Breast epithelium (tissue), 4 donors: ENCODE measurements at regions of chr21 and their contacts with region 1.

Region 1: DNA sequence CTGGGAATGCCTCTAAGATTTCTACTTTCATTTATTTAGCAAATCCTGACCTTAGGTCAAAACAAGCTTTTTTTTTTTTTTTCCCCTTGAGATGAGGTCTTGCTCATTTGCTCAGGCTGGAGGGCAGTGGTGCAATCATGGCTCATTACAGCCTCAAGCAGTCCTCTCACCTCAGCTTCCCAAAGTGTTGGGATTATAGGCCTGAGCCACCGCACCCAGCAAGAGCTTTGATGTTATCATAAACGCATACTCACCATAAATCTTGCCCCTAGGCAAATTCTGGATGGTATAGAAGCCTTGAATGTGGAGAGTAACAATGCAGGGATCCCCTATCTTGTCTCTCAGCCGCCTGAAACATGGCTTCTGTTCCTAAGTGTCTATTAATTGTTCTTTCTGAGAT is 24.7 kb upstream of the CLDN8 start:
- DNase-seq: no peak
- H3K4me3 ChIP-seq: no peak overlapping the region
- H3K27ac ChIP-seq: no peak overlapping the region
- H3K4me1 ChIP-seq: no peaks in the 10 kb centered on the region
- H3K27me3 ChIP-seq: no peaks in the 10 kb centered on the region
- CTCF ChIP-seq: no peak
- POLR2A ChIP-seq: no peak

Region 2: GRCh38 chr21:31260790-31261189 is 1020.1 kb after region 1 on chr21:
- intact Hi-C with region 1: loop called (anchors 5 kb)
- DNase-seq: no peak
- H3K4me3 ChIP-seq: no peak overlapping the region
- H3K27ac ChIP-seq: no peak overlapping the region
- H3K4me1 ChIP-seq: no peaks in the 10 kb centered on the region
- H3K27me3 ChIP-seq: no peaks in the 10 kb centered on the region
- CTCF ChIP-seq: no peak
- POLR2A ChIP-seq: no peak

Region 3: GRCh38 chr21:31604591-31605190 is 1364.0 kb after region 1 on chr21:
- intact Hi-C with region 1: no loop called
- DNase-seq: peak in 1 of 2 donors; percentile 70
- H3K4me3 ChIP-seq: no peak overlapping the region
- H3K27ac ChIP-seq: no peak overlapping the region
- H3K4me1 ChIP-seq: no peaks in the 10 kb centered on the region
- H3K27me3 ChIP-seq: no peaks in the 10 kb centered on the region
- CTCF ChIP-seq: peak; percentile 72 to 80 (median 79)
- POLR2A ChIP-seq: no peak